Colonic mucosa (tissue), 4 donors: ENCODE measurements at regions of chr4 and their contacts with region 1.

Region 1: GRCh38 chr4:110475881-110476835 is at the start of gene ENPEP:
- DNase-seq: peak; percentile 42
- H3K4me3 ChIP-seq: no peak within 1 kb of the TSS
- H3K27ac ChIP-seq: no peak within 1 kb of the TSS
- H3K4me1 ChIP-seq: no peaks in the 10 kb centered on the region
- H3K27me3 ChIP-seq: no peaks in the 10 kb centered on the region
- CTCF ChIP-seq: no peak
- total RNA-seq, gene ENPEP: 0.27 to 0.88 TPM

Region 2: GRCh38 chr4:110400086-110400485 is 76.1 kb before region 1 on chr4:
- intact Hi-C with region 1: loop called (anchors 10 kb)
- DNase-seq: no peak
- H3K4me3 ChIP-seq: no peak overlapping the region
- H3K27ac ChIP-seq: no peak overlapping the region
- H3K4me1 ChIP-seq: no peaks in the 10 kb centered on the region
- H3K27me3 ChIP-seq: no peaks in the 10 kb centered on the region
- CTCF ChIP-seq: no peak

Region 3: GRCh38 chr4:110540982-110541440 is 64.9 kb after region 1 on chr4:
- intact Hi-C with region 1: no loop called
- DNase-seq: no peak
- H3K4me3 ChIP-seq: no peak overlapping the region
- H3K27ac ChIP-seq: no peak overlapping the region
- H3K4me1 ChIP-seq: no peaks in the 10 kb centered on the region
- H3K27me3 ChIP-seq: no peaks in the 10 kb centered on the region
- CTCF ChIP-seq: no peak